KBM-7 (cell line): ENCODE measurements at regions of chr5 and their contacts with region 1.

Region 1: GRCh38 chr5:148957591-148958202 is 105.2 kb downstream of the SH3TC2 start:
- DNase-seq: peak; percentile 55

Region 2: DNA sequence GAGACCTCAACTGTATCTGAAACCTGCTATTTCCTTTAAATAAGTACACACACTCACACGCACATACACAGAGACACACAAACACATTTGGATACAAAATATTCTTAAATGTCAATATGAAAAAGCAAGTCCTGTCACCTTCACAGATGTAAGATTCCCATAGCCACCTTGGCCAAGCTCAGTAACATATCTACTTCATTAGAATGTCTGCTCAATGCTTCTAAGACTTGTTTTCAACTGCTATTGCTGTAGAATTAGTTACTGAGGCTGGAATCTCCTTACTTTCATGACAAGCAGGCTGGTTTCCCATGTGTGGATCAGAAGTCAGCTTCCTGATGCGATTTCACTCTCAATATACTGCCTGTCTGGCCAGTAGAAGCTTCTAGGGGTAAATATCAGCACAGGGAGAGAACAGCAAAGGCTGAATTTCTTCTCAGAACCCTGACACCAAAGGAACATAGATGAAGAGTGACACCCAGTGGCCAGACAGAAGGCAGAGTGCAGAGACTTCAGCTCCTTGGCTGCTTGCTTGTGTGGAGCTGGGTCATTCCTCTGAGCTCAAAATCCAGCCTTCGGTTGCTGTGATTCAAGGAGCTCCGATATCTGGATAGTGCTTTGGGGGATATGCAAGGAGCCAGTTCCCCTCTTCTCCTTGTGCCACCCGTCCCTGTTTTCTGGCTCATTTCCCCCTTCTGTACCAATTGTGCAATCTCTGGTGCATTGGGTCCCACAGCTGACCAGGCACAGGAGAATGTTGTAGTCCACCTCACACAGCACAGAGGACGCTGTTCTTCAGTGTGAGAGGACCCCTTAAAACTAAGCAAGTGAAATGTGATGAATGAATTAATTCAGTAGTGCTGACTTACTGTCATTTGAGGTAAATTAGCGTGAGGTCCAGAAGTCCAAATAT is 157.0 kb after region 1 on chr5:
- in situ Hi-C with region 1: loop called (anchors 25 kb)
- DNase-seq: peak; percentile 72

Region 3: GRCh38 chr5:149406203-149406978 is 448.7 kb after region 1 on chr5:
- in situ Hi-C with region 1: no loop called
- DNase-seq: no peak